Activated CD8-positive, alpha-beta memory T cell treated with anti-CD3 and anti-CD28 coated beads, Interleukin-2, amount 10 ng/mL, durations not matched to agents 7 days and 5 days (primary cell): ENCODE measurements at regions of chr17 and their contacts with region 1.

Region 1: GRCh38 chr17:2222901-2223616 is 80.5 kb downstream of the SMG6 start:
- DNase-seq: peak; percentile 87
- ATAC-seq: peak; percentile 88
- H3K4me3 Mint-ChIP-seq: peak overlapping the region; percentile 40
- H3K27ac Mint-ChIP-seq: peak overlapping the region; percentile 77
- H3K4me1 Mint-ChIP-seq: peaks cover 47% of the 10 kb centered on the region
- H3K27me3 Mint-ChIP-seq: no peaks in the 10 kb centered on the region

Region 2: GRCh38 chr17:2207815-2208515 is 15.1 kb before region 1 on chr17:
- CTCF ChIA-PET with region 1: interaction called, 10 read pairs
- DNase-seq: no peak
- ATAC-seq: no peak
- H3K4me3 Mint-ChIP-seq: no peak overlapping the region
- H3K27ac Mint-ChIP-seq: no peak overlapping the region
- H3K4me1 Mint-ChIP-seq: peaks cover 32% of the 10 kb centered on the region
- H3K27me3 Mint-ChIP-seq: no peaks in the 10 kb centered on the region